Endothelial cell of umbilical vein (primary cell): ENCODE measurements at regions of chr6 and their contacts with region 1.

Region 1: DNA sequence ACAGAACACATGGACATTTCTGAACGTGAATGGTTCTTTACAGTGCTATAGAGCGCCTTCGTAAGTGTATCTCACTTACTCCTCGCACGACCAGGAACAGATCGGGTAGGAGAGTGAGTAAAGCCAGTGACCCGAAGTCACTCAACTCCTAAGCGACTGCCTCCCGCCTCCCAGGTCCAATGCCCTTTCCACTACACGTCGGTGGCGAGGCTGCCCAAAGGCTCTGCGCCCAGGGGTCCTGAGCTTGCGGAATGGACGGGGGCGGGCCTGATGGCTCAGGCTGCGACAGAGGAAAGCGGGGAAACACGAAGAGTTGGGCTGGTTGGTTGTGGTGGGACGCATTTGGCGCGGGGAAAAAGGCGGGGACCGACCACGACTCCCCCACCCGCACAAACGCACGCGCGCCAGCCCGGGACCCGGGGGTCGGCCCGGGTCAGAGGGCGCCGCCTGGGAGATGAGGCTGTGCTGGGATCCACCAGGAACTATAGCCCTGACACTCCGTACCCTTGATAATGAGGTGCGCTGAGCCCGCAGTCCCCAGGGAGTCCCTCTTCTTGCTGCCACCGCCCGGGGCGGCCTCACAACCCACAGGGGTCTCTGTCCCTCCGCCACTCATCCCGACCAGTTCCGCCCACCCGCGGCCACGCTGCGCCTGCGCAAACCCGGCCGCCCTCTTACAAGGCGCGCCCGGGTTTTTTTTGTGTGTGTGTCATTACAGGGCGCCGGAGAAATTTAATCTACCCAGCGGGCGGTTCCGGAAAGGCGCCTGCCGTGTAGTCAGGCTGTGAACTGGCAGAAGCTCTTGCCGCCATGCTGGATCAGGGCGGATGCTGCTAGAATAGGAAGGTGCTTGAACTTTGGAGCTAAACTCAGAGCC is at the start of gene BLOC1S5:
- DNase-seq: peak; percentile 98
- H3K4me3 ChIP-seq: peak within 1 kb of the TSS; percentile 59 to 88 (median 76)
- H3K27ac ChIP-seq: peak within 1 kb of the TSS; percentile 76
- H3K4me1 ChIP-seq: peaks cover 18% of the 10 kb centered on the region
- H3K27me3 ChIP-seq: no peaks in the 10 kb centered on the region
- CTCF ChIP-seq: peak in 1 of 2 donors; percentile 13
- POLR2A ChIP-seq: peak; percentile 87
- total RNA-seq, gene BLOC1S5: 16.3 and 19.1 TPM in 2 replicates

Region 2: DNA sequence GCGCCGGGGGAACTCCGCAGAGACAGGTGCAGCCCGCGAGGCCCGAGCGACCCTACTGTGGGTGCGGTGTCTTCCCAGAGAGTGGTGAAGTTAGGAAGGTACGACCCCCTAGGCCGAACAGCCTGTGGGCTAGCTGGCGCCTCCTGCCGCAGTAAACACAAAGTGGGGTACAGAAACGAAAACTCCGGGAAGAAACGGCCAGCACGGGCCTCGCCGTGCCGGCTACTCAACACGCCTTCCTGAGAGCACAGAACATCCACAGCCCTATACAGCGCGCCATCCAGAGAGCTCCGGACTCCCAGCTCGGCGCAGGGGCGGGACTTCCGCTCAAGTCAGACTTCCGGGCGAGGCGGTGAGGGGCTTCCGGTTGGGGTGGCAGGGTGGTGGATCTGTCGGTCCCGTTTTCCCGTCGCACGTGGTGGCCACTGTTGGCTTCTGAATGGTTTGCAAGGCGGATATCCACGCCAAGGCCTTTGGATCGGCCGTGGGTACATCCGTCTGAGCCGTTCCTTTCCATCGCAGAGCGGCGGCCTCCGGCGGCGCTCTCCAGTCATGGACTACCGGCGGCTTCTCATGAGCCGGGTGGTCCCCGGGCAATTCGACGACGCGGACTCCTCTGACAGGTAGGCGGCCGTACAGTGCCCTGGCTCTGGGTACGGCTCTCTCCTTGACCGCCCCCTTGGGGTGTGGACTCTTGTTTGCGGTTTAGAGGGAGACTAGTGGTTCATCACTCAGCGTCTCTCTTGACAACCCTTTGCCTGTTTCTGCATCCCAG is 674.4 kb before region 1 on chr6 and contains the starts of genes CAGE1 and RIOK1:
- CTCF ChIA-PET with region 1: no interaction called
- POLR2A ChIA-PET with region 1: no interaction called
- dilution Hi-C with region 1: no loop called
- intact Hi-C with region 1: loop called (anchors 10 kb)
- DNase-seq: peak; percentile 95
- H3K4me3 ChIP-seq: peak within 1 kb of the TSS; percentile 55 to 92 (median 77)
- H3K27ac ChIP-seq: peak within 1 kb of the TSS; percentile 66
- H3K4me1 ChIP-seq: peaks cover 13% of the 10 kb centered on the region
- H3K27me3 ChIP-seq: no peaks in the 10 kb centered on the region
- CTCF ChIP-seq: peak in 1 of 2 donors; percentile 14
- POLR2A ChIP-seq: peak; percentile 98
- total RNA-seq, gene CAGE1: not detected in 2 replicates
- total RNA-seq, gene RIOK1: 19.7 and 21.4 TPM in 2 replicates

Region 3: DNA sequence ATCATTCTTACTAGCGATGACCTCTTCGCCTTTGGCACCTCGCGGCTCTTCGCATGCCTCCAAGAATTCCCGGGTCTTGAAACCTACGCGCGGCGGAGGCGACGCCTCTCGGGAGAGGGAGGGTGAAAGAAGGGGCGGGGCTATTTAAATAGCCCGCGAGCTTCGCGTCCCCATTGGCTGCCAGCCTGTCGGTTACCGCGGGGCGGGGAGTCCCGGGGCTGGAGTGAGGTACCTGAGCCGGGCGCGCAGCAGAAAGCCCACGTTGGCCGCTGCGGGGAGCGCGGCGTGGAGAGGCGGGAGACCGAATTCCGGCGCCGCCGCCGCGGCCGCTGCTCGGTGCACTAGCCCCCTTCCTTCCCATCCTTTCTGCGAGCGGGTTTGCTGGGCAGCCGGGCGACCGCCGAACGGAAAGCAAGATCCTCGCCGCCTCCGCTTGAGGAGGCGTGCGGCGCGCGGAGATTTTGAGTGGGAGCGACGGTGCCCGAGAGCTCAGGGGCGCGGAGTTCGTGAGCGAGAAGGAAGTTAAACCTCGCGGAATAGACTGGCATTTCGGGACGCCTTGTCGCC is 338.1 kb before region 1 on chr6 and contains the start of gene BMP6:
- CTCF ChIA-PET with region 1: interaction called, 127 read pairs
- POLR2A ChIA-PET with region 1: no interaction called
- dilution Hi-C with region 1: no loop called
- intact Hi-C with region 1: loop called (anchors 1 kb)
- DNase-seq: peak; percentile 95
- H3K4me3 ChIP-seq: peak within 1 kb of the TSS; percentile 70 to 94 (median 73)
- H3K27ac ChIP-seq: peak within 1 kb of the TSS; percentile 59
- H3K4me1 ChIP-seq: peaks cover 30% of the 10 kb centered on the region
- H3K27me3 ChIP-seq: no peaks in the 10 kb centered on the region
- CTCF ChIP-seq: peak in 1 of 2 donors; percentile 6
- POLR2A ChIP-seq: peak; percentile 99
- total RNA-seq, gene BMP6: 221 and 234 TPM in 2 replicates

Region 4: GRCh38 chr6:7910654-7911344 is 153.2 kb before region 1 on chr6 and contains the start of gene TXNDC5:
- CTCF ChIA-PET with region 1: interaction called, 9 read pairs
- POLR2A ChIA-PET with region 1: no interaction called
- dilution Hi-C with region 1: no loop called
- intact Hi-C with region 1: loop called (anchors 2 kb)
- DNase-seq: peak; percentile 77
- H3K4me3 ChIP-seq: peak within 1 kb of the TSS; percentile 70 to 97 (median 76)
- H3K27ac ChIP-seq: peak within 1 kb of the TSS; percentile 94
- H3K4me1 ChIP-seq: peaks cover 45% of the 10 kb centered on the region
- H3K27me3 ChIP-seq: no peaks in the 10 kb centered on the region
- CTCF ChIP-seq: no peak
- POLR2A ChIP-seq: peak; percentile 76
- total RNA-seq, gene TXNDC5: 1,581 and 1,665 TPM in 2 replicates

Region 5: DNA sequence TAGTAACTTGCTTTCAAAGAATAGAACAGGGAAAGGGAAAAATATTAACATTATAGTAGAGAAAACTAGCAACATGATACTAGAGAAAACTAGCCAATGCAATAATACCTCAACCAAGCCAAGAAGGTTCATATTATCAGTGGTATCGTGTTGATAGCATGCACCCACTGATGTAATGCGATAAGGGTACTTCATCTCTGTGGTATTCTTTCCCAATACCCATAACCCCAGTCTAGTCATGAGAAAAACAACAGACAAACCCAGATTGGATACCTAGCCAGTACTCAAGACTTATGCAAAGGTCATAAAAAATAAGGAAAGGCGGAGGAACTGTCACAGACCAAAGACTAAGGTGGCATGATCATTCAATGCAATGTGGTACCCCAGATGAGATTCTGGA is 20.8 kb before region 1 on chr6:
- CTCF ChIA-PET with region 1: interaction called, 13 read pairs
- POLR2A ChIA-PET with region 1: no interaction called
- dilution Hi-C with region 1: no loop called
- intact Hi-C with region 1: no loop called
- DNase-seq: no peak
- H3K4me3 ChIP-seq: no peak overlapping the region
- H3K27ac ChIP-seq: no peak overlapping the region
- H3K4me1 ChIP-seq: peaks cover 7% of the 10 kb centered on the region
- H3K27me3 ChIP-seq: no peaks in the 10 kb centered on the region
- CTCF ChIP-seq: no peak
- POLR2A ChIP-seq: no peak

Region 6: DNA sequence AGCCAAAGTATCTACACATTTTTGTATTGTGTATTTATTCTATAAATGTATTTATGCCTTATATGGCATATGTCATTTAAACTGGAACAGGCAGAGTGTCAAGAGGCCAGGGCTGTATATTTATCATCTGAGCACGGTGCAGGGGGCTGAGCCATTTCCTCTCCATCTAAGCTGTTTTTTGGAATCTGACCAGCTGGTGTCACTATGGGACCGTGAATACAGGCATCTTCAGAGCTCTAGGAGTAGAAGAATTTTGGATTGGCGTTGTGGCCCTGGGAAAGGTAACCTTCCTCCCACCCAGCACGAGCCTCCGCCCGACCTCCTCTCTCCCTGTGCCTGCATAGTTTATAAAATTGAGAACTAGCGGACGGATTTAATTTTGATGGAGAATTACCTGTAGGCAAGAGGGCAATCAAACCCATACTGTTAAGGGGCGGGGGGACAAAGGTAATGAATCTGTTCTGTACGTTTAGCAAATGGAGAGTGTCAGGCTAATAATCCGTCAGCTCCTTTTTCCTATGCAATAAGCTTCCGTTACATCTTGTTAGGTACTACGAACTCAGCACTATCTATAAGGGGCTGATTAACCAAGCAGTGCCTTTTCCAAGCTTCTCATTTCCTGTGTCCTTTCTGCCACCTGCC is 67.4 kb after region 1 on chr6:
- CTCF ChIA-PET with region 1: interaction called, 7 read pairs
- POLR2A ChIA-PET with region 1: no interaction called
- dilution Hi-C with region 1: no loop called
- intact Hi-C with region 1: loop called (anchors 1 kb)
- DNase-seq: peak; percentile 65
- H3K4me3 ChIP-seq: no peak overlapping the region
- H3K27ac ChIP-seq: no peak overlapping the region
- H3K4me1 ChIP-seq: no peaks in the 10 kb centered on the region
- H3K27me3 ChIP-seq: peaks cover 4 to 6% of the 10 kb centered on the region in 2 experiments
- CTCF ChIP-seq: peak; percentile 48 to 60
- POLR2A ChIP-seq: no peak

Region 7: DNA sequence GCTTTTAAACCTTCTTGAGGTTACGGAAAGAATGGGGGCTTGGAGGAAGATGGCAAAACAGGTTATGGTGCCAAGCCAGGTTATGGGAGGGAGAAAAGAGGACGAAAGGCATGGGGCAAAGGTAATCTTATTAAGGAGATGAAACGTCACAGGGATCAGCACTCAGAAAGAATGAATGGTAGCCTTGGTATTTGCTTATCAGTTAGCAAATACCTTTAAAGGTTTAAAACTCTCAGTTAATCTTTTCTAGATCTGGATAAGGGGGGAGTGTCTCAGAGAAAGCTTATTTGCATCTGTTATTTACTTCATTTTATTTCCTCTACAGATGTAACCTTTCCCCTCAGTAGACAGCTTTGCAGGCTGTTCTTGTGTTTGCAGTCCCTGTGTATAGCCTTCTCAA is 93.8 kb after region 1 on chr6:
- CTCF ChIA-PET with region 1: no interaction called
- POLR2A ChIA-PET with region 1: no interaction called
- dilution Hi-C with region 1: no loop called
- intact Hi-C with region 1: no loop called
- DNase-seq: no peak
- H3K4me3 ChIP-seq: no peak overlapping the region
- H3K27ac ChIP-seq: no peak overlapping the region
- H3K4me1 ChIP-seq: no peaks in the 10 kb centered on the region
- H3K27me3 ChIP-seq: peaks cover 2 to 6% of the 10 kb centered on the region in 2 experiments
- CTCF ChIP-seq: no peak
- POLR2A ChIP-seq: no peak